Activated B cell treated with CpG ODN at 0.5 μM for 24 hours (primary cell): ENCODE measurements at regions of chr3 and their contacts with region 1.

Region 1: DNA sequence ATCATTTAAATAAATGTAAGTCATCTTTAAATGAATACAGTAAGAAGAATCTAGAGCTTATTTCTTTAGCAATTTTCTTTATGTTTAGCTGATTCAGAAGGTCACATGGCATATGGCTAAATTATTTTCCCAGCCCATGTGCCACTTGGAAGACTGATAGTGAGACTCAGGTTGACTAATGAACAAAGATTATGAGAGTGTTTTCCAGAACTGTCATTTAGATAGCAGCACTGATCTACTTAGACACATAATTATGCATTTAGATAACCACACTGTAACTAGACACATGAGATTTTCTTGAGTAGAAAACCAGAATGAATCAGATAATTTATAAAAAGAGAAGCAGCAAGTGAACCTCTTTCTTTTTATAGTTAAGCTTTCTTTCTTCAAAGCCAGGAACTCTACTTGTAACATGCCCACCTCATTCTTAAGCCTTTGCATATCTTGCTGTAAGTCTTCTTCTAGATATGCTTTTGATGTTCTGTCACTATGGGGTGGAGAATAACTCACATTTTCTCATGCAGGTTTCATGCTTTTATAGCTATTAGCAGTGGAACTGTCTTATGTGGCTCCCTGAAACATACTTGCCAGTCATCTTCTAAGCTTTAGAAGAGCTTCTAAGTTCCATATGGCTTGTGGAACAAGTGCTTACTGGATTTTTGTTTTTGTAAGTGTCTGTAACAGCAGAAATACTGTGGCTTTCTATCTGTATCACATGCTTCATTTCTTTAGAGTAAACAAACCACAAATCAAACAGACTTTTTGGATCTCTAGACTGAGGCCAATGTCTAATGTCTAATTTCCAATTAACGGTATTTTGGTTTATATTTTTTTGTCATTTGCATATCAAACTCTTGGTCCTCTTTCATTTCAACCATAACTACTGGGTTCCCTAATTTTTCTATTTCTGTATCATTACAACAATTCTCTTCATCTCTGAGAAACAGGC is 101.4 kb downstream of the LMLN start:
- DNase-seq: no peak
- ATAC-seq: no peak
- H3K4me3 Mint-ChIP-seq: no peak overlapping the region
- H3K27ac Mint-ChIP-seq: no peak overlapping the region
- H3K4me1 Mint-ChIP-seq: peaks cover 8% of the 10 kb centered on the region
- H3K27me3 Mint-ChIP-seq: peaks cover 3% of the 10 kb centered on the region
- CTCF ChIP-seq: no peak

Region 2: GRCh38 chr3:196537319-196537984 is 1523.9 kb before region 1 on chr3:
- CTCF ChIA-PET with region 1: no interaction called
- POLR2A ChIA-PET with region 1: no interaction called
- intact Hi-C with region 1: no loop called
- DNase-seq: peak; percentile 25
- ATAC-seq: peak; percentile 34
- H3K4me3 Mint-ChIP-seq: no peak overlapping the region
- H3K27ac Mint-ChIP-seq: no peak overlapping the region
- H3K4me1 Mint-ChIP-seq: peaks cover 2% of the 10 kb centered on the region
- H3K27me3 Mint-ChIP-seq: no peaks in the 10 kb centered on the region
- CTCF ChIP-seq: peak; percentile 23

Region 3: GRCh38 chr3:197613199-197613598 is 448.2 kb before region 1 on chr3:
- CTCF ChIA-PET with region 1: no interaction called
- POLR2A ChIA-PET with region 1: no interaction called
- intact Hi-C with region 1: no loop called
- DNase-seq: no peak
- ATAC-seq: no peak
- H3K4me3 Mint-ChIP-seq: no peak overlapping the region
- H3K27ac Mint-ChIP-seq: no peak overlapping the region
- H3K4me1 Mint-ChIP-seq: no peaks in the 10 kb centered on the region
- H3K27me3 Mint-ChIP-seq: no peaks in the 10 kb centered on the region
- CTCF ChIP-seq: no peak

Region 4: DNA sequence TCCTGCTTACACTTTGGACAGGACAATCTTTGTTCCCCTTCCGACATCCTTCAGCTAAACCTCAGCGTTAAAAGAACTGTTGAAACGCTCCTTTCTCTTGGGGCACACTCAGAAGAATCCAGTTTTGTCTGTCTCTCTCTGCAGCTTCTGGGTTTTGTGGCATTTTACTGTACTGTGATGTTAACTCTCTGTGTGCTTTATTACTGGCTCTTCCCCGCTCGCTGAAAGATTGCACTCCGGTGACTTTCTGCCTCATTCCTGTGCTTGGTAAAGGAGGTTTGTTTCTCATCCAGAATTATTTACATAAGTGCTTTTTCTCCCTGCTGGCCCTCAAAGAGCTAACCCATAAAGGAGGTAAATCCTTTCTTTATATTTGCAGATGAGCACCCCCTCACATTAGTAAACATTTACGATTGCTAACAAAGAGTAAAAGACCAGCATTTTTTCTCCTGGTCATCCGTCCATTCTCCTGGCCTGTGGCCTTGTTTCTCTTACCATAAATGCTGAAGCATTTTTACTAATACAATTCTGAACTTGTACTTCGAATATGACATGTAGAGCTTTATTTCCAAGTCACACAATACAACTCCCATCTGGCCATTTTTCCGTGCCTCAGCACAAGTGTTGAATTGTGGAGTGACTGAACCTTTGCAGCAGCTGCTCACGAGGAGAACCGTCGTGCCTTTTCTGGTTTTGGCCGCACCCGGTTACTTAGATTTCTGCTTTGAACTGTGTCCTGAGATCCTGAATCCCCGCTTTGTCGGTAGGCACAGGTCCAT is 180.7 kb before region 1 on chr3:
- CTCF ChIA-PET with region 1: no interaction called
- POLR2A ChIA-PET with region 1: no interaction called
- intact Hi-C with region 1: no loop called
- DNase-seq: no peak
- ATAC-seq: no peak
- H3K4me3 Mint-ChIP-seq: no peak overlapping the region
- H3K27ac Mint-ChIP-seq: no peak overlapping the region
- H3K4me1 Mint-ChIP-seq: peaks cover 6% of the 10 kb centered on the region
- H3K27me3 Mint-ChIP-seq: no peaks in the 10 kb centered on the region
- CTCF ChIP-seq: no peak

Region 5: GRCh38 chr3:197912770-197913476 is 148.5 kb before region 1 on chr3:
- CTCF ChIA-PET with region 1: no interaction called
- POLR2A ChIA-PET with region 1: interaction called, 10 read pairs
- intact Hi-C with region 1: no loop called
- DNase-seq: no peak
- ATAC-seq: no peak
- H3K4me3 Mint-ChIP-seq: no peak overlapping the region
- H3K27ac Mint-ChIP-seq: no peak overlapping the region
- H3K4me1 Mint-ChIP-seq: no peaks in the 10 kb centered on the region
- H3K27me3 Mint-ChIP-seq: no peaks in the 10 kb centered on the region
- CTCF ChIP-seq: no peak

Region 6: GRCh38 chr3:198032039-198032936 is 29.1 kb before region 1 on chr3:
- CTCF ChIA-PET with region 1: no interaction called
- POLR2A ChIA-PET with region 1: interaction called, 11 read pairs
- intact Hi-C with region 1: no loop called
- DNase-seq: no peak
- ATAC-seq: no peak
- H3K4me3 Mint-ChIP-seq: no peak overlapping the region
- H3K27ac Mint-ChIP-seq: no peak overlapping the region
- H3K4me1 Mint-ChIP-seq: no peaks in the 10 kb centered on the region
- H3K27me3 Mint-ChIP-seq: no peaks in the 10 kb centered on the region
- CTCF ChIP-seq: no peak

Region 7: GRCh38 chr3:198080521-198081280 is 19.3 kb after region 1 on chr3:
- CTCF ChIA-PET with region 1: interaction called, 33 read pairs
- POLR2A ChIA-PET with region 1: interaction called, 26 read pairs
- intact Hi-C with region 1: no loop called
- DNase-seq: peak; percentile 86
- ATAC-seq: peak; percentile 90
- H3K4me3 Mint-ChIP-seq: peak overlapping the region; percentile 89
- H3K27ac Mint-ChIP-seq: peak overlapping the region; percentile 79
- H3K4me1 Mint-ChIP-seq: peaks cover 11% of the 10 kb centered on the region
- H3K27me3 Mint-ChIP-seq: peaks cover 25% of the 10 kb centered on the region
- CTCF ChIP-seq: peak; percentile 41